ENCODE measurements at regions of chr19 and their contacts with region 1.

Region 1: DNA sequence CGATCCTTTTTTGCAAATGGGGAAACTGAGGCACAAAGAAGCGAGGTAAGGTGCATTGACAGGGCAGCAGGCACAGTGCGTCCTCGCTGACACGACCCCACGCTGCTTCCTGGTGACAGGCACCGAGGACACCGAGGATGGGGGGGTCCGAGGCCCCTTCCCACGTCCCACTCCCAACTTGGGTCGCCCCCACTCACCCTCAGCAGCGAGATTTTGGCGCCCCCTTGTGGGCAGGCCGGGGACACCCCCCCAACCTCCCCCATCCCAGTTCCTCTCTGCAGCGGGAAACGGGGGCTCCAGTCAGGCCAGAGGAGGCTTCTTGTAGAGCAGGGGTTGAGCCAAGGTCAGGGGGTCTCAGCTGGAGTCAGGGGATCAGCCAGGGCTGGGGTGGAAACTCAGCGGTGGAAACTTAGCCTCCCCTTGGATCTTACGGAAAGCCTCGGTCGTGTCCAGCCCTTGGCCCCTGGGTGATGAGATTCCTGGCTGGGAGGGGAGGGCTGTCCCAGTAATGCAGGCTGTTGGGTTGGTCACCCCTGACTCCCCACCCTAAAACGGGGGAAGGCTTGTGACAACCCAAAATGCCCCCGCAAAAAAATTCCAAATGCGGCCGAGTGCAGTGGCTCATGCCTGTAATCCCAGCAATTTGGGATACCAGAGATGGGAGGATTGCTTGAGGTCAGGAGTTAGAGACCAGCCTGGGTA is 8.2 kb downstream of the SMIM24 start:
- DNase-seq: peak; percentile 87
- H3K4me3 ChIP-seq: peak overlapping the region in 1 of 2 experiments; percentile 32; a peak in 1 of 4 replicates
- H3K27ac ChIP-seq: no peak overlapping the region
- H3K4me1 ChIP-seq: peaks cover 0 to 2% of the 10 kb centered on the region in 2 experiments; a peak in 1 of 4 replicates
- H3K27me3 ChIP-seq: no peaks in the 10 kb centered on the region; the same call in 1 of the 2 replicates
- CTCF ChIP-seq: peak; percentile 90
- EP300 ChIP-seq: no peak
- RAD21 ChIP-seq: peak; percentile 71

Region 2: GRCh38 chr19:3304871-3305423 is 167.2 kb before region 1 on chr19:
- CTCF ChIA-PET with region 1: interaction called, 31 read pairs
- POLR2A ChIA-PET with region 1: no interaction called
- DNase-seq: peak; percentile 75
- H3K4me3 ChIP-seq: peak overlapping the region in 1 of 2 experiments; percentile 50; a peak in 2 of 4 replicates
- H3K27ac ChIP-seq: no peak overlapping the region
- H3K4me1 ChIP-seq: no peaks in the 10 kb centered on the region; a peak in 1 of 4 replicates
- H3K27me3 ChIP-seq: peaks cover 7% of the 10 kb centered on the region; the same call in 1 of the 2 replicates
- CTCF ChIP-seq: peak; percentile 93
- EP300 ChIP-seq: no peak
- RAD21 ChIP-seq: peak; percentile 82

Region 3: GRCh38 chr19:3330047-3330446 is 142.1 kb before region 1 on chr19:
- CTCF ChIA-PET with region 1: interaction called, 41 read pairs
- POLR2A ChIA-PET with region 1: interaction called, 3 read pairs
- DNase-seq: no peak
- H3K4me3 ChIP-seq: no peak overlapping the region
- H3K27ac ChIP-seq: no peak overlapping the region
- H3K4me1 ChIP-seq: no peaks in the 10 kb centered on the region; a peak in 1 of 4 replicates
- H3K27me3 ChIP-seq: no peaks in the 10 kb centered on the region
- CTCF ChIP-seq: no peak
- EP300 ChIP-seq: no peak
- RAD21 ChIP-seq: no peak

Region 4: DNA sequence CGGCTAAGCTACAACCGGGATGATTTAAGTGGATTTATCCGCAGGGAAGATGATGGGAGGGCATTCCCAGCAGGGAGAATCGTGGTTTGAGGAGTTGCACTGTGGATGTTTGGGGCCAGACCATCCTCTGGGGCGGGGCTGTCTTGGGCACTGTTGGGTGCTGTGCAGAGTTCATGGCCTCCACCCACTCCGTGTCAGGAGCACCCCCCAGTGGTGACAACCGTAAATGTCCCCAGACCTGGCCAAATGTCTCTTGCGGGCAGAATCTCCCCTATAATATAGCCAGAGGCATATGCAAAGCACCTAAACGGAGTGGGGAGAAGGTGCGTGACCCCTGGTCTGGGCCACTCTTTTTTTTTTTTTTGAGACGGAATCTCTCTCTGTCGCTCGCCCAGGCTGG is 32.0 kb before region 1 on chr19:
- CTCF ChIA-PET with region 1: interaction called, 20 read pairs
- POLR2A ChIA-PET with region 1: no interaction called
- DNase-seq: peak; percentile 67
- H3K4me3 ChIP-seq: no peak overlapping the region
- H3K27ac ChIP-seq: peak overlapping the region in 1 of 2 experiments; percentile 1; a peak in 1 of 4 replicates
- H3K4me1 ChIP-seq: peaks cover 0 to 41% of the 10 kb centered on the region in 2 experiments; a peak in 1 of 4 replicates
- H3K27me3 ChIP-seq: no peaks in the 10 kb centered on the region
- CTCF ChIP-seq: peak; percentile 45
- EP300 ChIP-seq: no peak
- RAD21 ChIP-seq: peak; percentile 50

Region 5: GRCh38 chr19:3459089-3459881 is 12.8 kb before region 1 on chr19:
- CTCF ChIA-PET with region 1: interaction called, 11 read pairs
- POLR2A ChIA-PET with region 1: no interaction called
- DNase-seq: peak; percentile 95
- H3K4me3 ChIP-seq: no peak overlapping the region
- H3K27ac ChIP-seq: peak overlapping the region; percentile 67 to 95
- H3K4me1 ChIP-seq: peaks cover 8 to 32% of the 10 kb centered on the region in 2 experiments; a peak in 2 of 4 replicates
- H3K27me3 ChIP-seq: no peaks in the 10 kb centered on the region
- CTCF ChIP-seq: no peak
- EP300 ChIP-seq: peak in 1 of 2 experiments; percentile 33; a peak in 1 of 4 replicates
- RAD21 ChIP-seq: 0 out of 2 replicates have a peak, but pooled peaks have one; percentile 1

Region 6: DNA sequence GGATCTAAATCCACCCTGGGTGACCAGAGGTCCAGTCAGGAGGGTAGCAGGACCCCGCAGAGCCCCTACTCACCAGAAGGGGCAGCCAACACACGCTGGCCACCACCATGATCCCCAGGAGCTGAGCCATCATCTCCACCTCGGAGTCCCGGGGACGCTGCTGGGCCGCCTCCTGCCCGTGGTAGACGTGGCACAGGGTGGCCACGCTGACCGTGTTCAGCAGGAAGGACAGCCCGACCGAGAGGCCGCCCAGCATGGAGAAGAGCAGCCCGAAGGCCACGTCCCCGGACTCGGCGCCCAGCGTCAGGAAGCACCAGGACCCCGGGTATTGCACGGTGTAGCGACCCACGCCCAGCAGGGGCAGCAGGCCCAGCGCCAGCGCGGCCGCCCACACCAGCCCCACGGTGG is 127.7 kb after region 1 on chr19:
- CTCF ChIA-PET with region 1: no interaction called
- POLR2A ChIA-PET with region 1: no interaction called
- DNase-seq: peak; percentile 72
- H3K4me3 ChIP-seq: no peak overlapping the region
- H3K27ac ChIP-seq: no peak overlapping the region
- H3K4me1 ChIP-seq: no peaks in the 10 kb centered on the region
- H3K27me3 ChIP-seq: no peaks in the 10 kb centered on the region
- CTCF ChIP-seq: peak; percentile 33
- EP300 ChIP-seq: no peak
- RAD21 ChIP-seq: no peak

Region 7: GRCh38 chr19:3743486-3743885 is 271.4 kb after region 1 on chr19:
- CTCF ChIA-PET with region 1: no interaction called
- POLR2A ChIA-PET with region 1: no interaction called
- DNase-seq: no peak
- H3K4me3 ChIP-seq: no peak overlapping the region
- H3K27ac ChIP-seq: no peak overlapping the region
- H3K4me1 ChIP-seq: no peaks in the 10 kb centered on the region
- H3K27me3 ChIP-seq: no peaks in the 10 kb centered on the region
- CTCF ChIP-seq: no peak
- EP300 ChIP-seq: no peak
- RAD21 ChIP-seq: no peak

Measured in SK-N-SH (cell line).